ENCODE measurements at regions of chr3 and their contacts with region 1.

Region 1: DNA sequence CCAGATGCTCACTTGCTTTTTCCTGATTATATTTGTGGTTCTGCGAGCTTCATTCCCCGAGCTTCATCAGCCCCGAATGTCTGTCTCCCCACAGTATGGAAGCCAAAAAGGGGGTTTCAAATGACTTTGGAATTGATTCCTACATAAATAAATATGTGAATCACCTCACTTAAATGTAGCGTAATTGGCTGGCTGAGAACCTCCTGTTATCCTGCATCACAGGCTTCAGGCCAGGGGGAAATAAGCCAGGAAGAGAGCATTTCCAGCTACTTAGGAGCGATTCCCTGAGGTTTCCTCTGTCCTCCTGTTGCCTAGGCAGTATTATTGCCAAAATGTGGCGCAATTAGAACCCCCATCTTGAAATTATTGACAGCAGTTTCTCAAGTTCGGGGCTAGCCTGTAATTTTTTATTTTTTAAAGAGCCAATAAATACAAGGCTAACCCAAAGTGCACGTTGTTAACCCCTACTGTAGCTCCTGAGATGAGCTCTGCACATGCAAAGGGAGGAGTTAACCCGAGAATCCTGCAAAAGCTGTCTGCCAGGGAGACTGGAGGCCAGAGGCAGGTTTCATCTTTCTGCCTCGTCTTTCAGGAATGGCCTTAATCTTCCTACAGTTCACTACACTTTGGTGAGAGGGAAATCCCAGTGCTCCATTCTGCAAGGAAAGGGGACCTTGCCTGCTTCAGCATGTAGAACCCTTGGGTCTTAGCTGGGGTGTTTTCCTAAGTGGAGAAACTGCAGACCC is 148.2 kb downstream of the ADAMTS9 start:
- DNase-seq: no peak
- H3K4me3 ChIP-seq: no peak overlapping the region
- H3K27ac ChIP-seq: no peak overlapping the region
- H3K4me1 ChIP-seq: no peaks in the 10 kb centered on the region
- H3K27me3 ChIP-seq: no peaks in the 10 kb centered on the region
- CTCF ChIP-seq: no peak
- POLR2A ChIP-seq: no peak

Region 2: DNA sequence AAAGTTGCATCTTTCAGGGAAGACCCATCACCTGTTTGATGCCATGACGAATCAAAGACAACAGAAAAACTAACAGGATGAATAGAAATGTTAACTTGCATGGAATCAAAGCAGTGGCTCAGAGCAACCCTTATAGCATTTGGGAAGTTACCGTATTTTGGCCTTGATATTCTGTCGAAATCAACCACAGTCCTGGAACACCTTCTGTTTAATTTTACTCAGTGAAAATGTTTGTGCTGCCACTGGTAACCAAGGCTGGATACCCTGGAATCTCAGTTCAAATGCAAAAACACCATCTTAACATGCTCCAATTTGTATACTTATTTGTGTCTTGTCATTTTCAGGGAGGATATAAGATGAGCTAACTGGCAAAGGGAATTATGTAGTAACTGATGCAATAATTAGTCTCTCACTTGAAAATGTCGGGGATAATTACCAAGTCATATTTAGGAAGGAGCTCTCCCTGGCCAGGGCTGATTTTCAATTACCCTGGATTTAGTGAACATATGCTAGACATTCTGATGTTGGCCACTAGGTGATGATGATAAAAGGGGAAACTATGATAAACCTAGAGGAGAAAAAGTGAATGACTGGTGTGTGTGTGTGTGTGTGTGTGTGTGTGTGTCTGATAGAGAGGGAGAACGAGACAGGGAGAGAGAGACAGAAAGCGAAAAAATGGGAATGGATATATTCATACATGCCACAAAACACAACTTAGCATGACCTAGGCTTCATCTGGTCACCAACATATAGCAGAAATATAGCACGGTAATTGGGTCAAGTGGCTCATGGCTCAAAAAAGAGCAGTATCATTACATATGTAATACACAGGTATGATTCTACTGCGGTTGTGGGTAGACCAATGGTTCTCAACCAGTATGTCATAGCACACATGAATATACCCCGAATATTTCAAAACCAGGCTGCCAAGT is 295.3 kb before region 1 on chr3:
- intact Hi-C with region 1: no loop called
- DNase-seq: no peak
- H3K4me3 ChIP-seq: no peak overlapping the region
- H3K27ac ChIP-seq: no peak overlapping the region
- H3K4me1 ChIP-seq: peaks cover 7 to 9% of the 10 kb centered on the region in 2 donors
- H3K27me3 ChIP-seq: no peaks in the 10 kb centered on the region
- CTCF ChIP-seq: peak in 2 of 6 experiments; percentile 29 to 53
- POLR2A ChIP-seq: no peak

Region 3: GRCh38 chr3:64475037-64475436 is 64.6 kb before region 1 on chr3:
- intact Hi-C with region 1: no loop called
- DNase-seq: no peak
- H3K4me3 ChIP-seq: no peak overlapping the region
- H3K27ac ChIP-seq: no peak overlapping the region
- H3K4me1 ChIP-seq: no peaks in the 10 kb centered on the region
- H3K27me3 ChIP-seq: no peaks in the 10 kb centered on the region
- CTCF ChIP-seq: no peak
- POLR2A ChIP-seq: no peak

Region 4: GRCh38 chr3:64684715-64685350 is 145.2 kb after region 1 on chr3:
- intact Hi-C with region 1: loop called (anchors 5 kb)
- DNase-seq: peak; percentile 39 to 54
- H3K4me3 ChIP-seq: peak overlapping the region; percentile 53 to 95 (median 76)
- H3K27ac ChIP-seq: peak overlapping the region; percentile 67 to 98 (median 94)
- H3K4me1 ChIP-seq: peaks cover 0 to 7% of the 10 kb centered on the region in 2 donors
- H3K27me3 ChIP-seq: no peaks in the 10 kb centered on the region
- CTCF ChIP-seq: no peak
- POLR2A ChIP-seq: peak in 1 of 2 donors; percentile 50